HEK293T (cell line): ENCODE measurements at regions of chr1 and their contacts with region 1.

Region 1: DNA sequence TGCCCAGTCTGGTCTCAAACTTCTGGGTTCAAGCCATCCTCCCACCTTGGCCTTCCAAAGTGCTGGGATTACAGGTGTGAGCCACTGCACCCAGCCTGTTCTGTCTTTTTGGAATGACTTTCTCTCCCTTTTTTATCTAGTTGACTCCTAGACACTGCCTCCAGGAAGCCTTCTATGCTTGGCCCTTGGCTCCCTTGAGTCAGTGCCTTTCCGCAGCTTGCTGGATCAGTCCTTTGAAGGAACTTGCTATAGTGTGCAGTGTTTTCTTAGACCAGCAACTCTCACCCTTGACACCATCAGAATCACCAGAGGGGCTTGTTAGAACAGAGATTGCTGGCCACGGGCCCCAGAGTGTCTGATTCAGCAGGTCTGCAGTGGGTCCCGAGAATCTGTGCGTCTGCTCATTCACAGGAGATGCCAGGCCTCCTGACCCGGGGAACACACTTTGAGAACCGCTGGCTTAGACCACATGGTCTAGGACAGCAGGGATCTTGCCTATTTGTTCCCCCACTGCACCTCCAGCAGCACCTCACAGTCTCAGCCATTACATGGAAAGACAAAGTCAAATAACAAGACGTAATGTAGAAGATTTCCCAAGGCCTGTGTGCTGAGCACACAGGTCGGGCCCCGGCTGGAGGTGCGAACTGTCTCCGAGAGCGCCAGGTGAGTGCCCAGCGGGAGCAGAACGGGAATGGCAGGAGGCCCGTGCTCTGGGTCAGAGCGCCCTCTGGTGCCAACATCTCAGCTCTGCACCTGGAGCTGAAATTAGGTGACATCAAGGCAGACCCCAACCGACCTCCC is 27.4 kb upstream of the CTPS1 start:
- DNase-seq: peak; percentile 87

Region 2: GRCh38 chr1:40849801-40850592 is 102.1 kb before region 1 on chr1:
- CTCF ChIA-PET with region 1: interaction called, 58 read pairs
- POLR2A ChIA-PET with region 1: interaction called, 3 read pairs
- DNase-seq: peak; percentile 79

Region 3: GRCh38 chr1:40862008-40862863 is 89.9 kb before region 1 on chr1 and contains the start of gene CITED4:
- CTCF ChIA-PET with region 1: interaction called, 10 read pairs
- POLR2A ChIA-PET with region 1: interaction called, 9 read pairs
- DNase-seq: peak; percentile 93

Region 4: GRCh38 chr1:40932018-40932417 is 20.1 kb before region 1 on chr1:
- CTCF ChIA-PET with region 1: interaction called, 16 read pairs
- POLR2A ChIA-PET with region 1: no interaction called
- DNase-seq: no peak

Region 5: DNA sequence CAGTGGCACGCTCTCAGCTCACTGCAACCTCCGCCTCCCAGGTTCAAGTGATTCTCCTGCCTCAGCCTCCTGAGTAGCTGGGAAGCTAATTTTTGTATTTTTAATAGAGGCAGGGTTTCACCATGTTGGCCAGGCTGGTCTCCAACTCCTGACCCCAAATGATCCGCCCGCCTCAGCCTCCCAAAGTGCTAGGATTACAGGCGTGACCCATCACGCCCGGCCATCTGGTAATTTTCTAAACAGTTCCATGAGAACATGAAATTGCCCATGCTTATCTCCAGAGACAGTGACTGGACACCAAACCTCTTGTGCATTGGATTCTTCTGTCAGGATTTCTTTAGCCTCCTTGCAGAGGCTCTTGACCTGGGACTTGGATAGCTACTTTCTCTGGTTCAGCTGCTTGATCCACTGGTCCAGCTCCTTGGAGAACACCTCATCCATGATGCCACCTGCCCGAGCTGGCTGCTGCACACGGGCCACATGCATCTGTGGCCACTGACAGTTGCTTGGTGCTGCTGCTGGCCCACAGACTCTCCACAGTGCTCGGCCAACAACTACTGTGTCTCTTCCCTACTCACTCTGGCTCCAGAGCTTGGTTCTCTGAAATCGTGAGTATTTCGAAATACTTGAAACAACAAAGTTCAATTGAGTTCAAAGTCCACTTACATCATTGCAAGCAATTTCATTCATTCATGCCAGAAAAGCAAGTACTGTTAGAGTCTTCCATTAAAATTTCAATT is 12.7 kb before region 1 on chr1:
- CTCF ChIA-PET with region 1: interaction called, 18 read pairs
- POLR2A ChIA-PET with region 1: no interaction called
- DNase-seq: no peak